T-cell (primary cell): ENCODE measurements at regions of chr5 and their contacts with region 1.

Region 1: DNA sequence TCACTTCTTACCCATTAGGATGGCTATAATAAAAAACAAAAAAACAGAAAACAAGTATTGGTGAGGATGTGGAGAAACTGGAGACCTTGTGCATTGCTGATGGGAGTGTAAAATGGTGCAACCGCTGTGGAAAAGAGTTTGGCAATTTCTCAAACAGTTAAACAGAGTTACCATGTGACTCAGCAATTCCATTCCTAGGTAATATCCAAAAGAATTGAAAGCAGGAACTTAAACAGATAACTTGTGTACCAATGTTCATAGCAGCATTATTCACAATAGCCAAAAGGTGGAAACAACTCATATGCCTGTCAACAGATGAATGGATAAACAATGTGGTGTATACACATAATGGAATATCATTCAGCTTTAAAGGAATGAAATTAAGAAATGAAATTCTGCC is 28.9 kb downstream of the DCP2 start:
- DNase-seq: no peak
- ATAC-seq: no peak
- H3K4me3 ChIP-seq: no peak overlapping the region
- H3K4me3 Mint-ChIP-seq: no peak overlapping the region
- H3K27ac ChIP-seq: no peak overlapping the region
- H3K27ac Mint-ChIP-seq: peak overlapping the region in 1 of 2 donors; percentile 69
- H3K4me1 ChIP-seq: no peaks in the 10 kb centered on the region
- H3K4me1 Mint-ChIP-seq: peaks cover 0 to 13% (median 13%) of the 10 kb centered on the region in 3 donors
- H3K27me3 ChIP-seq: no peaks in the 10 kb centered on the region
- H3K27me3 Mint-ChIP-seq: no peaks in the 10 kb centered on the region

Region 2: GRCh38 chr5:111559680-111560079 is 1445.8 kb before region 1 on chr5:
- CTCF ChIA-PET with region 1: interaction called in 1 of 2 experiments, 14 read pairs
- POLR2A ChIA-PET with region 1: no interaction called
- DNase-seq: no peak
- ATAC-seq: no peak
- H3K4me3 ChIP-seq: no peak overlapping the region
- H3K4me3 Mint-ChIP-seq: no peak overlapping the region
- H3K27ac ChIP-seq: no peak overlapping the region
- H3K27ac Mint-ChIP-seq: no peak overlapping the region
- H3K4me1 ChIP-seq: no peaks in the 10 kb centered on the region
- H3K4me1 Mint-ChIP-seq: no peaks in the 10 kb centered on the region
- H3K27me3 ChIP-seq: no peaks in the 10 kb centered on the region
- H3K27me3 Mint-ChIP-seq: peaks cover 0 to 14% of the 10 kb centered on the region in 2 donors